ENCODE measurements at regions of chr7 and their contacts with region 1.

Region 1: GRCh38 chr7:75914730-75915585 is at the start of gene POR:
- DNase-seq: peak; percentile 35
- ATAC-seq: peak; percentile 97
- H3K4me3 ChIP-seq: peak within 1 kb of the TSS; percentile 93 to 98
- H3K27ac ChIP-seq: peak within 1 kb of the TSS; percentile 93
- H3K4me1 ChIP-seq: peaks cover 15% of the 10 kb centered on the region
- H3K27me3 ChIP-seq: no peaks in the 10 kb centered on the region
- CTCF ChIP-seq: no peak
- total RNA-seq, gene POR: 168 TPM

Region 2: GRCh38 chr7:75892634-75893272 is 22.2 kb before region 1 on chr7:
- CTCF ChIA-PET with region 1: no interaction called
- POLR2A ChIA-PET with region 1: interaction called, 10 read pairs
- in situ Hi-C with region 1: no loop called
- intact Hi-C with region 1: no loop called
- DNase-seq: no peak
- ATAC-seq: 0 out of 2 replicates have a peak, but pooled peaks have one; percentile 4
- H3K4me3 ChIP-seq: no peak overlapping the region
- H3K27ac ChIP-seq: no peak overlapping the region
- H3K4me1 ChIP-seq: no peaks in the 10 kb centered on the region
- H3K27me3 ChIP-seq: no peaks in the 10 kb centered on the region
- CTCF ChIP-seq: no peak

Region 3: DNA sequence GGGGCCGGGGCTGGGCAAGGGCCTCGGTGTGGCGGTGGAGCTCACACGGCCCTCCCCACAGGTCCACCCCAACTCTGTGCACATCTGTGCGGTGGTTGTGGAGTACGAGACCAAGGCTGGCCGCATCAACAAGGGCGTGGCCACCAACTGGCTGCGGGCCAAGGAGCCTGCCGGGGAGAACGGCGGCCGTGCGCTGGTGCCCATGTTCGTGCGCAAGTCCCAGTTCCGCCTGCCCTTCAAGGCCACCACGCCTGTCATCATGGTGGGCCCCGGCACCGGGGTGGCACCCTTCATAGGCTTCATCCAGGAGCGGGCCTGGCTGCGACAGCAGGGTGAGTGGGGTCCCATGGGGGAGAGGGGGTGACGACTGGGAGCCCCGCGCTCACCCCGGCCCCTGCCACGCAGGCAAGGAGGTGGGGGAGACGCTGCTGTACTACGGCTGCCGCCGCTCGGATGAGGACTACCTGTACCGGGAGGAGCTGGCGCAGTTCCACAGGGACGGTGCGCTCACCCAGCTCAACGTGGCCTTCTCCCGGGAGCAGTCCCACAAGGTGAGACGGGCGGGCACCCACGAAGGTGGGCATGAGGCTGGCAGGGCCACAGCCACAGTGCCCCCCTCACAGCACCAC is 70.7 kb after region 1 on chr7:
- CTCF ChIA-PET with region 1: no interaction called
- POLR2A ChIA-PET with region 1: interaction called, 10 read pairs
- in situ Hi-C with region 1: no loop called
- intact Hi-C with region 1: no loop called
- DNase-seq: no peak
- ATAC-seq: no peak
- H3K4me3 ChIP-seq: no peak overlapping the region
- H3K27ac ChIP-seq: no peak overlapping the region
- H3K4me1 ChIP-seq: peaks cover 11% of the 10 kb centered on the region
- H3K27me3 ChIP-seq: no peaks in the 10 kb centered on the region
- CTCF ChIP-seq: no peak